Mucosa of descending colon (tissue), 3 donors: ENCODE measurements at regions of chr16 and their contacts with region 1.

Region 1: GRCh38 chr16:30844671-30845449 is 49.0 kb downstream of the BCL7C start:
- DNase-seq: peak in 1 of 3 donors; percentile 93
- ATAC-seq: peak; percentile 94
- H3K4me3 ChIP-seq: no peak overlapping the region
- H3K4me1 ChIP-seq: peaks cover 10% of the 10 kb centered on the region
- CTCF ChIP-seq: peak; percentile 68

Region 2: DNA sequence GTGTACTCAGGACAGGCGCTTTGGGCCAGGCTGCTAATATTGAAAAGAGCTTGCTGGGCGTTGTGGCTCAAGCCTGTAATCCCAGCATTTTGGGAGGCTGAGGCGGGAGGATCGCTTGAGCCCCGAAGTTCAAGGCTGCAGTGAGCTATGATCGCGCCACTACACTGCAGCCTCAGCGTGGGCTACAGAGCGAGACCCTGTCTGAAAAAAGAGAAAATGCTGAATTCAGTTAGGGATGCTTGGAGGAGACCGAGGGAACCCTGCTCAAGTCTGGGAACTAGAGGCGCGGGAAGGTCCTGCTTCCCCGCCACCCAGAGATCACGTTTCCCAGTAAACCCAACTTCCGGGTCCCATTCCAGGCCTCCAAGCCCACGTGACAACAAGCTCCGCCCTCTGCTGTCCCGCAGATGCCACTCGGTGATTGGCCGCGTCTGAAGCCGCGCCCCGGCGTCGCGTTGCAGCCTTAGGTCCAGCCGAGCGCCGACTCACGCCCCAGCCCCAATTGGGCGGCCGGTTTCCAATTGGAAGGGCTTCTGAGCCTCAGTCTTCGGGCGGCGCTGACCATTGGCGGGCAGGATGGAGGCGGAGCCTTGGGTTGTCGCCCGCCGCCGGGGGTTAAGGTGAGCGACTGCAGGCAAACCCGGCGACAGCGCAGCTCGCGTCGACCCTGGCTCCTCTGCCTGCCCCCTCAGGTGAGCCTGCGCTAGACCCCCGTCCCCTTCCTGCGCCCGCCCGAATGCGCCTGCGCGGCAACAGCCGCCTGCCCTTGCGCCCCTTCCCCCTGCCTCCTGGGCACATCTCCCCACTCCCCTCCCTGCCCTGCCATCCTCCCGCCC is 96.8 kb before region 1 on chr16 and contains the start of gene PHKG2:
- intact Hi-C with region 1: no loop called
- DNase-seq: peak; percentile 99 to 100 (median 99)
- ATAC-seq: peak; percentile 94
- H3K4me3 ChIP-seq: peak within 1 kb of the TSS; percentile 52
- H3K4me1 ChIP-seq: peaks cover 25% of the 10 kb centered on the region
- CTCF ChIP-seq: peak; percentile 22
- total RNA-seq, gene PHKG2: 32.1 to 37.6 (median 33.0) TPM

Region 3: DNA sequence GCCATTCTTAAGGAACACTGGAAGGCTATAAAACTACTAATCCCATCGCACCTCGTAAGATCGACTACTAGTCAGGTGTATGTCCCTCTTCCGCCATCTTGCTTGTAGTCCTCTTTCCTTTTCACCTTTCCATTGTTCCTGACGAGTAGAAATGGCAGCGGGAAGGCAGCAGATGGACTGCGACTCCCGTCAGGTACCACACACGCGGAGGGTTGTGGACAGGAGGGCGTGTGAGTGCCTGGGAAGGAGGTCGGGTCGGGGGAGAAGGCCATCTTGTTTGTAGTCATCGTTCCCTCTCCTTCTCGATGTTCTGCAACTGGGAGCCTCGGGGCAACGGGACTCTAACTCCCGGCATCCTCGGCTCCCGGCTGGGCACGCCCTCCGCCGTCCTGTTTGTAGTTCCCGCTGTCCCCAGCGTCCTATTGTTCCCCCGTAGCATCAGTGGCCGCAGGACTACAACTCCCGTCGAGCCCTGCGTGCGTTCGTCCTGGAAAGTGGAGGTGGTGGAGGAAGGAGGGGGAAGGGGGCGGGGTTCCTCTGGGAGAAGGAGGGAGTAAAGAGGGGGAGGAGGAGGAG is 78.2 kb after region 1 on chr16:
- intact Hi-C with region 1: loop called in 1 of 2 experiments (anchors 5 kb)
- DNase-seq: peak; percentile 99 to 100 (median 100)
- ATAC-seq: peak; percentile 80
- H3K4me3 ChIP-seq: peak overlapping the region; percentile 32
- H3K4me1 ChIP-seq: peaks cover 7% of the 10 kb centered on the region
- CTCF ChIP-seq: no peak

Region 4: DNA sequence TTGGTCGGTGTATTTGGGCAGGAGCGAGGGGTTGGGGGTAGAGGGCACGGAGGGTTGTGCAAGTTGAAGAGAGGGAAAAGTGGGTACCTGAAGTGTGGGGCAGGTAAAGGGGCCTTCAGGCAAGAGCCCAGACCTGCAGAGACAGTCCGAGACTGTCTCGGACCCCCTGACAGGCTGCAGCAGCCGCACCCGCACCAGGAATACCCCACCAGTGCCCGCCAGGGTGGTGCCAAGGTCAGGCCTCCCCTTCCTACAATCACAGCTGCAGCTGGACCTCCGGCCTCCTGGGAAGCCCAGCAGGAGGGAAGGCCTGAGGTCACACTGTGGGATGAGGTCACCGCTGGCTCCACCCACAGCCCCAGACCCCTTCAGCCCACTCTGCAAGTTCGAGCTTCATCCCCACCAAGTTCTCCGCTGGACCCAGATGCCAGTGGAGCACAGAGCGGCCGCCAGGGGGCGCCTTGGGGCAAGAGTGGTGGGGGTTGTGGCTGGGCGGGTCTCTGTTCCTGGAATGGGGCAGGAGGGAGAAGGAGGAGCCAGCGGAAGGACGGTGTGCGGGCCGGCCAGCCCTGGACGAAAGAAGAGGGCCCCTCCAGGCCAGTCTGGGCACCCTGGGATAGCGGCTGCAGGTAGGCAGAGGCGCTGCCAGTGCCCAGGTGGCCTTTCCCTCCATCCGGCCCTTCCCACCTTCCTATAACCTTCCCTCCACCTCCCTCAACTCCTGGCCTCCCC is 140.0 kb after region 1 on chr16 and contains the start of gene HSD3B7:
- intact Hi-C with region 1: no loop called
- DNase-seq: peak; percentile 91 to 95 (median 94)
- ATAC-seq: peak; percentile 96
- H3K4me3 ChIP-seq: no peak within 1 kb of the TSS
- H3K4me1 ChIP-seq: peaks cover 4% of the 10 kb centered on the region
- CTCF ChIP-seq: peak; percentile 91
- total RNA-seq, gene HSD3B7: 16.5 to 27.7 (median 23.2) TPM